SK-N-SH (cell line): ENCODE measurements at regions of chr4 and their contacts with region 1.

Region 1: DNA sequence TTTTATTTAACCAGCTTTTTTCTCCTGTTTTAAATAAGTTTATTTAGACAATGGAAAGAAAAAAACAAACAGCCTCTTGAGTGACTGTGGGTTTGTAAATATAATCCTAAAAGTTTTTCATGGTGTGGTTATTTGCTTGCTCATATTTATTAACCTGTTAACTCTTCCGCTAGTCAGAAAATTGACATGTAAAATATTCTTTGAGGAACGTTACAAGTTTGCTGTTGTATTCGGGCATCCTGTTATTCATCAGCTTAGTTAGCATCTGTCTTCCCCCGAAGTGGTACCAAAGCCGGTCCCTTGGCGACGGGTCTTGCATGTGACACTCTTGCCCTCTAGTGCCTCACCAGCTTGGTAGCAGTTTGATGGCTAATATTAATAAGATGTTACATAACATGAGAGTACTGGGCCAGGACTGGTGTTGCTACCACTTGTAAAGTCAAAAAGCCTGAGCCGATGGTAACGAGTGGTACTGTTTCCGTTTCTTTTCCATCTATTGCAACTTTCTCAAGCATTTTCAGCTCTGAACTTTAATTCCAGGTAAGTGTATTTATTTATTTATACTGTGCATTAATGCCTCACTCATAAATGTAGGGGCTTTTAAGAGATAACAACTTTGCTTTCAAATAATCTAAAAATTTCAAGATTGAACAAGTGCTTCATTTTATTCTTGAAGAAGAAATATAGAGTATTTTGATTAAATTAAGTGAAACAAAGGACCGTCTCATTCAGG is at the start of gene NDST3:
- DNase-seq: peak; percentile 81
- H3K4me3 ChIP-seq: peak within 1 kb of the TSS; percentile 74 to 80
- H3K27ac ChIP-seq: peak within 1 kb of the TSS in 1 of 2 experiments; percentile 50; a peak in 1 of 4 replicates
- H3K4me1 ChIP-seq: peaks cover 0 to 2% of the 10 kb centered on the region in 2 experiments; a peak in 2 of 4 replicates
- H3K27me3 ChIP-seq: no peaks in the 10 kb centered on the region
- CTCF ChIP-seq: peak; percentile 66
- EP300 ChIP-seq: 0 out of 4 replicates have a peak, but pooled peaks of 1 of the 2 experiments have one; percentile 19
- RAD21 ChIP-seq: peak; percentile 99
- polyA plus RNA-seq, gene NDST3: 1.2 and 1.4 TPM in 2 replicates

Region 2: DNA sequence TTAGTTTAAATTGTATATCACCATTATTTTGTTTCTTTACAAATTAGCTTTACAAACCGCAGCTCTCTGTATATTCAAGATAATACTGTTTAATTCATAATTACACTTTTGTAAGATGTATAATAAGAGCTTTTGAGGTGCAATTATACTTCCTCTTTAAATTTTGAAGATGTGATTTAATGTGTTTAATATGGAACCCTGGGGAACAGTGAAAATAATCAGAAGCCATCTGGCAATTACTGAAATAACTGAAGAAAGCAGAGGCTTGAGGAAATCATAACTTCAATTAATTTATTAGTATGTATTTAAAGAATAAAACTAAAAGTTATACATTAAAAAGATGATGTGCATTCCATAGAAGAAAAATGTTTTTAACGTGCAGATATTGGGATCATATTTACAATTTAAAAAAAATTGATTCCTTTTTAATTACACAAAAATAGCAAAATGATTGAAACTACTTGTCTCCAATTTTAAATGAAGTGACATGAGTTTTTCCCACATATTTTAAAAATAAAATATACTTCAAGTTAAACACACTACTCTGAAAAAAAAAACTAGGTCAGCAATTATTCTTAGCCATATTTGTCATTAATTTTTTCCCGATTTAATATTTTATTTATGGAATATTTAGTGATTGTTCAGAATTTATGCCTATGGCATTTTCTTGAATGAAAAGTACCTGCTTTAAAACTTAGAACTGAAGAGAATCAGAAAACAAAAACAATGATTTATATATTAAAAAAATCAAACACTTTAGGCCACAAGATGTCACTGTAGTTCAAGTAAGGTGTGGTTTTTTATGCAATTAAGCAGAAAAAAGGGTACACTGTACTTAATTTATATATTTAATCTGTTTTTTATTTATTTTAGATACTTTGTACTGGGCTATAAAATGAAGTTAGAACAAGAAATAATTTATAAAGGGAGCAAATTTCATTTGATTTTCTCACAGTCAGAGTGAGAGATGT is 1978.1 kb before region 1 on chr4:
- CTCF ChIA-PET with region 1: interaction called, 12 read pairs
- POLR2A ChIA-PET with region 1: no interaction called
- DNase-seq: peak; percentile 1
- H3K4me3 ChIP-seq: no peak overlapping the region
- H3K27ac ChIP-seq: no peak overlapping the region
- H3K4me1 ChIP-seq: no peaks in the 10 kb centered on the region
- H3K27me3 ChIP-seq: no peaks in the 10 kb centered on the region
- CTCF ChIP-seq: peak; percentile 54
- EP300 ChIP-seq: no peak
- RAD21 ChIP-seq: peak; percentile 53

Region 3: DNA sequence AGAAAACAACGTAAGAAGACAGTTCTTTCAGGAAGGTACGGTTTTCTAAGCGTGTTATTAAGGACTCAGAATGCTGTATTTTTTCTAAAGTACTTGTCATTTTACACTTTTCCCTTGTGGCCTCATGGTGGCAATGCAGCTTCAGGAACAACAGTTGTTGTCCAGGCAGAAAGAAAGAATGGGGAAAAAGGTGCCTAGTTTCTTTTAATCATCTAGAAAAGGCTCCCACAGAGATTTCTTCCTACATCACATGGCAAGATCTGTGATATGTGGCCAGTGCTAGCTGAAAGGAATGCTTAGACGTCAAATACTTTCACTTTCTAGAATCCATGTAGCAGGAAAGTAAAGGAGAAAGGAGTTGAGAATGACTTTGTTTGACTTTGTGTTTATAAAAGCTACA is 899.8 kb before region 1 on chr4:
- CTCF ChIA-PET with region 1: interaction called, 66 read pairs
- POLR2A ChIA-PET with region 1: no interaction called
- DNase-seq: peak; percentile 30
- H3K4me3 ChIP-seq: no peak overlapping the region
- H3K27ac ChIP-seq: no peak overlapping the region
- H3K4me1 ChIP-seq: no peaks in the 10 kb centered on the region; a peak in 1 of 4 replicates
- H3K27me3 ChIP-seq: no peaks in the 10 kb centered on the region
- CTCF ChIP-seq: peak; percentile 73
- EP300 ChIP-seq: no peak
- RAD21 ChIP-seq: peak; percentile 95

Region 4: GRCh38 chr4:118047057-118047456 is 12.8 kb after region 1 on chr4:
- CTCF ChIA-PET with region 1: interaction called, 12 read pairs
- POLR2A ChIA-PET with region 1: no interaction called
- DNase-seq: no peak
- H3K4me3 ChIP-seq: no peak overlapping the region
- H3K27ac ChIP-seq: no peak overlapping the region
- H3K4me1 ChIP-seq: no peaks in the 10 kb centered on the region
- H3K27me3 ChIP-seq: no peaks in the 10 kb centered on the region
- CTCF ChIP-seq: no peak
- EP300 ChIP-seq: no peak
- RAD21 ChIP-seq: no peak

Region 5: GRCh38 chr4:118086344-118086743 is 52.1 kb after region 1 on chr4:
- CTCF ChIA-PET with region 1: no interaction called
- POLR2A ChIA-PET with region 1: no interaction called
- DNase-seq: no peak
- H3K4me3 ChIP-seq: peak overlapping the region in 1 of 2 experiments; percentile 7; a peak in 1 of 4 replicates
- H3K27ac ChIP-seq: peak overlapping the region; percentile 72 to 78; a peak in 3 of 4 replicates
- H3K4me1 ChIP-seq: peaks cover 0 to 16% of the 10 kb centered on the region in 2 experiments; a peak in 2 of 4 replicates
- H3K27me3 ChIP-seq: no peaks in the 10 kb centered on the region
- CTCF ChIP-seq: no peak
- EP300 ChIP-seq: peak; percentile 43 to 91; a peak in 3 of 4 replicates
- RAD21 ChIP-seq: no peak

Region 6: GRCh38 chr4:118273642-118274041 is 239.4 kb after region 1 on chr4:
- CTCF ChIA-PET with region 1: interaction called, 10 read pairs
- POLR2A ChIA-PET with region 1: no interaction called
- DNase-seq: no peak
- H3K4me3 ChIP-seq: no peak overlapping the region
- H3K27ac ChIP-seq: no peak overlapping the region
- H3K4me1 ChIP-seq: no peaks in the 10 kb centered on the region
- H3K27me3 ChIP-seq: no peaks in the 10 kb centered on the region
- CTCF ChIP-seq: no peak
- EP300 ChIP-seq: no peak
- RAD21 ChIP-seq: no peak